Motor neuron (in vitro differentiated cells): ENCODE measurements at regions of chr9 and their contacts with region 1.

Region 1: DNA sequence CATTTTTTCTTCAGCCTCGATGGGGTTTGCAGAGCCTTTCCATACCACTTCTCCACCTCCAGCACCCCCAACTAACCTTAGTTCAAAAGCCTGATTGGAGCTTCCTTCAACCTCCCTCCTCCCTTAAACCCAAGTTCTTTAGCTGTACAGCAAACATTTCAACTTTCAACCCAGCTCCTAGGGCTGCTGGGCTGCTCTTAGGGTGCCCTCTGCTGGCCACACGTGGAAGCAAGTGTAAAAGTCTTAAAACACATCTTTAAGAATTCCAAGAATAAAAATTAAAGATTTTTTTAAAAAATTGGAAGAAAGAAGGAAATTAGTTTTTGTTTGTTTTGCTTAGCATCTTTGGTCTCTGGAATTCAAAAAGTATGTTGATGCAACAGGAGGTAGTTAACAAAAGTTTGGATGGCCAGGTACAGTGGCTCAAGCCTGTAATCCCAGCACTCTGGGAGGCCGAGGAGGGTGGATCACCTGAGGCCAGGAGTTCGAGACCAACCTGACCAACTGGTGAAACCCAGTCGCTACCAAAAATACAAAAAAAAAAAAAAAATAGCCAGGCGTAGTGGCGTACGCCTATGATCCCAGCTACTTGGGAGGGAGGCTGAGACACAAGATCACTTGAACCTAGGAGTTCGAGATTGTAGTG is 15.5 kb upstream of the HSD17B3 start:
- ATAC-seq: peak; percentile 43 to 82 (median 62)
- H3K4me3 ChIP-seq: no peak overlapping the region
- H3K27ac ChIP-seq: no peak overlapping the region
- H3K4me1 ChIP-seq: peaks cover 0 to 3% of the 10 kb centered on the region in 2 donors

Region 2: DNA sequence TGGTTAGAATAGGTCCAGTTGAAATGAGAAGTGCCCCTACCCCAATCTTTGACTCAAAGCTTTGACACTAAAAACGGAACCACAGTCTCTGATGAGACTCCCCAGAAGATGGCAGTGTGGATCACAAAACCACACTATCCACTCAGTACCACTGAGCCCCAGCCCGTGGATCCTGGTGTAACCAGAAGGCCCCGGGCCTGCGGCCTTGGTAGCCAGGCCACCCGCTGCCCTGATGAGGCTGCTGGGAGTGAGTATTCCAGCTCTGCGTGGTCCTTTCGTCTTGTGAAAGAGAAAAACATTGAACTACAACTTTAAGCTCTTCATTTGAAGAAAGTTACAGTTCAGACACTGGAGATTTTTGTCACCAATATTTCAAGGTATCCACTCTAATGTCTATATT is 1636.0 kb before region 1 on chr9:
- in situ Hi-C with region 1: loop called in 1 of 9 experiments (anchors 25 kb)
- ATAC-seq: peak; percentile 93 to 100 (median 98)
- H3K4me3 ChIP-seq: no peak overlapping the region
- H3K27ac ChIP-seq: no peak overlapping the region
- H3K4me1 ChIP-seq: no peaks in the 10 kb centered on the region

Region 3: GRCh38 chr9:96398582-96399324 is 81.3 kb after region 1 on chr9:
- in situ Hi-C with region 1: no loop called
- ATAC-seq: peak in 1 of 8 experiments; percentile 64
- H3K4me3 ChIP-seq: no peak overlapping the region
- H3K27ac ChIP-seq: no peak overlapping the region
- H3K4me1 ChIP-seq: peaks cover 8 to 24% of the 10 kb centered on the region in 2 donors